Activated naive CD4-positive, alpha-beta T cell treated with anti-CD3 and anti-CD28 coated beads for 36 hours (primary cell): ENCODE measurements at regions of chr19 and their contacts with region 1.

Region 1: DNA sequence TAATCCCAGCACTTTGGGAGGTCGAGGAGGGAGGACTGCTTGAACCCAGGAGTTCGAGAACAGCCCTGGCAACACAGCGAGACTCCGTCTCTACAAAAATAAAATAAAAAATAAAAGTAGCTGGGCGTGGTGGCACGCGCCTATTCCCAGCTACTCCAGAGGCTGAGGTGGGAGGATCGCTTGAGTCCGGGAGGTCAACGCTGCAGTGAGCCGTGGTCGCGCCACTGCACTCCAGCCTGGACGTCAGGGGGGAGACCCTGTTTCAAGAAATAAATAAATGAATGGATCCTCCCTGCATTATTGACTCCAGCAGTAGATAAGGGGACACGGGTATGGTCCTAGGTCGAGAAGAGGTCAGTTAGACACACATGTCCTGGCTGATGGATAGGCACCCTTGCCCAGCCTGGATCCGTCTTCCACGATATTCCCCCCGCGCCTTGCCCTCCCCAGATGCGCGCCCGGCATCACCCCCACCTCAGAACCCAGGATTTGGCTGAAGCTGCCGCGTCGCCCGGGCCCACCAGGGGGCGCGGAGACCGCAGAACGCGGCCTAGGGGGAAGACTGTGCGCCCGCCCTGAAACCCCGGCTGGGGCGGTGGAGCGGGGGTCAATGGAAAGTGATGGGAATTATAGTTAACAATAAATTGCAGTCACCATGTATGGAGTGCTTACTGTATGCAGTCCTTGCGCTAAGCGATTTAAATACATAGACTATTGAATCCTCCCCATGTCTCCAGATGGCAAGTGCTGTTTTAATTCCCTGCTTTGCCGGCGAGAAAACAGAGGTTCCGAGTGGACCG is 2.1 kb upstream of the HOOK2 start:
- DNase-seq: peak; percentile 85
- H3K4me3 Mint-ChIP-seq: peak overlapping the region; percentile 72
- H3K27ac Mint-ChIP-seq: peak overlapping the region; percentile 82
- H3K4me1 Mint-ChIP-seq: peaks cover 30% of the 10 kb centered on the region
- H3K27me3 Mint-ChIP-seq: no peaks in the 10 kb centered on the region

Region 2: GRCh38 chr19:12789904-12790619 is 12.6 kb after region 1 on chr19:
- CTCF ChIA-PET with region 1: interaction called, 303 read pairs
- intact Hi-C with region 1: loop called (anchors 1 kb)
- DNase-seq: peak; percentile 97
- H3K4me3 Mint-ChIP-seq: peak overlapping the region; percentile 97
- H3K27ac Mint-ChIP-seq: peak overlapping the region; percentile 96
- H3K4me1 Mint-ChIP-seq: peaks cover 25% of the 10 kb centered on the region
- H3K27me3 Mint-ChIP-seq: no peaks in the 10 kb centered on the region

Region 3: GRCh38 chr19:12796146-12797071 is 19.0 kb after region 1 on chr19:
- CTCF ChIA-PET with region 1: interaction called, 303 read pairs
- intact Hi-C with region 1: loop called (anchors 1 kb)
- DNase-seq: peak; percentile 84
- H3K4me3 Mint-ChIP-seq: peak overlapping the region; percentile 67
- H3K27ac Mint-ChIP-seq: peak overlapping the region; percentile 74
- H3K4me1 Mint-ChIP-seq: peaks cover 40% of the 10 kb centered on the region
- H3K27me3 Mint-ChIP-seq: no peaks in the 10 kb centered on the region

Region 4: DNA sequence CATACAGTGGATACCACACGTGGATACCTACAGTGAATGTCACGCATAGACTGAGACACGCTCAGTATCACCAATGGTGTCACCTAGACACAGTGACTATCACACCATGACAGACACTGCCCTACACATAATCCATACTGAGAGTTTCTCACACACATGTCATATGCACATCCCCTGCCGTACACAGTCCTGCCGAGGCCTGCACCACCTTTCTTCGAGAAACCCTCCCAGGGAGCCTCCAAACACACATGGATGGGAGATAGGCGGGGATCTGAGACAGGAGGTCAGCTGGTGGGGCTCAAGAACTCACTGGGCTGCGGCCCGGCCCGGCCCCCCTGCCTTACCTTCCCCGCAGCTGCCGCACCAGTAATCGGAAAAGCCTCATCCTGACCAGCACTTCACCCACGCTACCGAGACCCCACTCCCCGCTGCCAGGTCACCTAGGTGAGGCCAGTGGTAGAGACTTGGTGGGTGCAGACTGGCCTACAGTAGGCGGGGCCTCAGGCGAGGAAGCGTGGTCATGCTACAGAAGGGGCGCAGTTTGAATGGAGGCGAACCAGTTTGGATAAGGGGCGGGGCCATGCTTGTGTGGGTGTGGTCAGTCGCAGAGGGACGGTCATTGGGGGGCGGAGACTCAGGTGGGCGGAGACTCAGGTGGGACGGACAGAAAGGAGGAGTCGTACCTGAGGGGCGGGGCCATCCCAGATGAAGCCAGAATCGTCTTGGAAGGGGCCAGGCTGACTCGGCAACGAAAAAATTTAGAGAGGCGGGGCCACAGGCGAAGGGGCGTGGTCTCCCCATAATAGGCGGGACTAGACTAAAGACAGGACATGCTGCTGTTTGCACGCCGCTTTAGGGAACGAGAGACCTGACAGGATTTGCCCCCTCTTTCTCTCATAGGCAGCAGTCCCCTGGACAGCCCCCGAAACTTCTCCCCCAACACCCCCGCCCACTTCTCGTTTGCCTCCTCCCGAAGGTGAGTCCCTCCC is 63.0 kb after region 1 on chr19:
- CTCF ChIA-PET with region 1: no interaction called
- intact Hi-C with region 1: loop called (anchors 1 kb)
- DNase-seq: peak; percentile 67
- H3K4me3 Mint-ChIP-seq: no peak overlapping the region
- H3K27ac Mint-ChIP-seq: no peak overlapping the region
- H3K4me1 Mint-ChIP-seq: peaks cover 26% of the 10 kb centered on the region
- H3K27me3 Mint-ChIP-seq: peaks cover 69% of the 10 kb centered on the region

Region 5: DNA sequence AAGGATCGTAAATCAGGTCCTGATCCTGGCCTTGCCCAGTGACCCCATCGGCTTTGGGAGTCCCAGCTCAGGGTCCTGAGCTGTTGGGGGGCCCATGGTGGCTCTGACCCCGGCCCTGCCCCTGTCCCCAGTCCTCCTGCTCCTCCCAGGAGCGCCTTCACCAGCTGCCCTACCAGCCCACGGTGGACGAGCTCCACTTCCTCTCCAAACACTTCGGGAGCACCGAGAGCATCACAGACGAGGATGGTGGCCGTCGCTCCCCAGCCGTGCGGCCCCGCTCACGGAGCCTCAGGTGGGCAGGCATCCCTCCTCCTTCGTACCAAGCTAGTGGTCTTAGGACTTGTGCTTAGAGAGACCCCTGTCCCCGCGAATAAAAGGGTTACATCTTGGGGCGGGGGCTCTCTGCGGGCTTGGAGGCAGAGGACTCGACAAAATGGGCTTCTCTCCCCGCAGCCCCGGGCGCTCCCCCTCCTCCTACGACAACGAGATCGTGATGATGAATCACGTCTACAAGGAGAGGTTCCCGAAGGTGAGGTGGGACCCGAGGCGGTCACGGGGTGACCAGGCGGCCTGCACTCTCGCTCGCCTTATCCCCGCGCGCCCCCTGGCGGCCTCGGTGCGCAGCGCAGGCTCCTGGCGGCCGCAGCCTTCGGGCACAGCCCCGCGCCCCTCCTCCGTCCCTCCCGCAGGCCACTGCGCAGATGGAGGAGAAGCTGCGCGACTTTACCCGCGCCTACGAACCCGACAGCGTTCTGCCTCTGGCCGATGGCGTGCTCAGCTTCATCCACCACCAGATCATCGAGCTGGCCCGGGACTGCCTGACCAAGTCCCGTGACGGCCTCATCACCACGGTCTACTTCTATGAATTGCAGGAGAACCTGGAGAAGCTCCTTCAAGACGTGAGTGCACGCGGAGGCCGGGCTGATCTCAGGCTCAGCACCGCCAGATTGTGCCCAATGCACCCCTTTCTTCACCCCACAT is 70.0 kb after region 1 on chr19:
- CTCF ChIA-PET with region 1: interaction called, 18 read pairs
- intact Hi-C with region 1: no loop called
- DNase-seq: peak; percentile 87
- H3K4me3 Mint-ChIP-seq: peak overlapping the region; percentile 36
- H3K27ac Mint-ChIP-seq: no peak overlapping the region
- H3K4me1 Mint-ChIP-seq: peaks cover 3% of the 10 kb centered on the region
- H3K27me3 Mint-ChIP-seq: peaks cover 21% of the 10 kb centered on the region

Region 6: DNA sequence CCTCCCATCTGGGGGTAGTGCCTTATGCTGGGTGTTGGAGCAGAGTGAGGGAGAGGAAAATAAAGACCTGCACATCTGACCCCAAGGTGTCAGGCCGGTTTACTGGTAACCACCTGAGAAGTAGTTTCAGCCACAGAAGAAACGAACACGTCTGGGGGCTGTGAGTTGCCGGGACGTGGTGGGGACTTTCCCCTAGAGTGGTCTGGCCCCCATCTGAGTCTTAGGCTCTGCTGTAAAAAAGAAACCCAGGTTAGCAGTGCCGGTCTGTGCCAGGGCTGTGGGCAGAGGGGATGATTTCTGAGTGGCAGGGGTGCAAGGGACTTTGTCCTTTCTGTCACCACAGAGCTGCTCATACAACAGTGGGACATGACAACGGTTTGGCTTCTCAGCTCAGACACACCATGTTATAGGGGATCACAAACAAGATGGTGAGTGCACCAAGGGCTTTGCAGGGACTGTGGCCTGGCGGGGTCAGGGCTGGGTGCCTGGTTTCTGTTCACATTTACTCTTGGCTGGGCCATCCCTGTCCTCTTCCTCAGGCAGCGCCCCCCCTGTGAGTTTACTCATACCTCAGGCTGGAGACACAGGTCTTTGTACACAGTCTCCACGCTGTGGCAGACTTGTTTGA is 122.6 kb after region 1 on chr19:
- CTCF ChIA-PET with region 1: no interaction called
- intact Hi-C with region 1: no loop called
- DNase-seq: no peak
- H3K4me3 Mint-ChIP-seq: no peak overlapping the region
- H3K27ac Mint-ChIP-seq: no peak overlapping the region
- H3K4me1 Mint-ChIP-seq: no peaks in the 10 kb centered on the region
- H3K27me3 Mint-ChIP-seq: no peaks in the 10 kb centered on the region